ENCODE measurements at regions of chr1 and their contacts with region 1.

Region 1: GRCh38 chr1:234309598-234310459 is 63.4 kb upstream of the COA6 start:
- DNase-seq: peak; percentile 84
- ATAC-seq: peak; percentile 97
- H3K4me3 Mint-ChIP-seq: no peak overlapping the region
- H3K27ac Mint-ChIP-seq: no peak overlapping the region
- H3K4me1 Mint-ChIP-seq: peaks cover 16% of the 10 kb centered on the region
- H3K27me3 Mint-ChIP-seq: peaks cover 5% of the 10 kb centered on the region
- CTCF ChIP-seq: peak; percentile 88

Region 2: GRCh38 chr1:234154320-234155251 is 155.2 kb before region 1 on chr1:
- CTCF ChIA-PET with region 1: interaction called, 13 read pairs
- POLR2A ChIA-PET with region 1: no interaction called
- intact Hi-C with region 1: loop called (anchors 1 kb)
- DNase-seq: peak; percentile 20
- ATAC-seq: peak; percentile 83
- H3K4me3 Mint-ChIP-seq: no peak overlapping the region
- H3K27ac Mint-ChIP-seq: no peak overlapping the region
- H3K4me1 Mint-ChIP-seq: no peaks in the 10 kb centered on the region
- H3K27me3 Mint-ChIP-seq: peaks cover 12% of the 10 kb centered on the region
- CTCF ChIP-seq: peak; percentile 93

Region 3: GRCh38 chr1:234212764-234213657 is 96.8 kb before region 1 on chr1:
- CTCF ChIA-PET with region 1: interaction called, 127 read pairs
- POLR2A ChIA-PET with region 1: no interaction called
- intact Hi-C with region 1: loop called (anchors 2 kb)
- DNase-seq: peak; percentile 53
- ATAC-seq: peak; percentile 66
- H3K4me3 Mint-ChIP-seq: no peak overlapping the region
- H3K27ac Mint-ChIP-seq: no peak overlapping the region
- H3K4me1 Mint-ChIP-seq: peaks cover 27% of the 10 kb centered on the region
- H3K27me3 Mint-ChIP-seq: peaks cover 47% of the 10 kb centered on the region
- CTCF ChIP-seq: peak; percentile 70

Region 4: DNA sequence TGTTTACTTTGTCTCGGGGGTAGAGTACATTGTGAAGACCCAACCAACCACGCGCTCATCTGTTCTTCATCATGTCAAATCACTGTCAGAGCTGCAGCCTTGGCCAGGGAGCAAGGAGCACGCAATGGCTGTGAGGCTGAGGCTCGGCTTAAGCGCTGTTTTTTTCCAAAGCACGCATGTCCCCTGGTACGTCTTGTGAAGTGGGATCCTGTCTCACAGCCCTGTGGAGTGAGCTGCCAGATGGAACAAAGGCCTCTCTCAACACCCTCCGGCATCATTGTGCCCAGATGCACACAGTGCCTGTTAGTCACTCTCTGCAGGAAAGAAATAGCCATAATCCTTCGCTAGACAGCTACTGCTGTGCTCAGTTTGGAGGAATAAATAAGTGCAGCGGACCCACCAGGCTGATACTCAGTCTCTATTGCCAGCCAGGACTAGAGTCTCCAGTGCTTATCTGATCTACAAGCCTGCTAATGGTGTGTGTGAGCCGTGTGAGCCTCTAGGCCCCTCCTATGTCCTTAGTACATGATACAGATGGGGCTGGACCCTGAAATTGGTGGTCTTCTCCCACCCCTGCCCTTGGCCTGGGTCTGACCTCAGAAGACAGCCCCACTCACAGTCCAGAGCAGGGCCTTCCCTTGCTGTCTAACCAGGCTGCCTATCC is 27.9 kb before region 1 on chr1:
- CTCF ChIA-PET with region 1: interaction called, 13 read pairs
- POLR2A ChIA-PET with region 1: interaction called, 3 read pairs
- intact Hi-C with region 1: no loop called
- DNase-seq: no peak
- ATAC-seq: no peak
- H3K4me3 Mint-ChIP-seq: no peak overlapping the region
- H3K27ac Mint-ChIP-seq: no peak overlapping the region
- H3K4me1 Mint-ChIP-seq: no peaks in the 10 kb centered on the region
- H3K27me3 Mint-ChIP-seq: peaks cover 5% of the 10 kb centered on the region
- CTCF ChIP-seq: no peak

Region 5: GRCh38 chr1:234320069-234320468 is 10.2 kb after region 1 on chr1:
- CTCF ChIA-PET with region 1: interaction called, 60 read pairs
- POLR2A ChIA-PET with region 1: interaction called, 3 read pairs
- intact Hi-C with region 1: no loop called
- DNase-seq: no peak
- ATAC-seq: no peak
- H3K4me3 Mint-ChIP-seq: no peak overlapping the region
- H3K27ac Mint-ChIP-seq: no peak overlapping the region
- H3K4me1 Mint-ChIP-seq: peaks cover 10% of the 10 kb centered on the region
- H3K27me3 Mint-ChIP-seq: peaks cover 33% of the 10 kb centered on the region
- CTCF ChIP-seq: no peak

Region 6: GRCh38 chr1:234373064-234373958 is 63.5 kb after region 1 on chr1 and contains the start of gene COA6:
- CTCF ChIA-PET with region 1: interaction called, 10 read pairs
- POLR2A ChIA-PET with region 1: no interaction called
- intact Hi-C with region 1: no loop called
- DNase-seq: peak; percentile 95
- ATAC-seq: peak; percentile 87
- H3K4me3 Mint-ChIP-seq: peak within 1 kb of the TSS; percentile 98
- H3K27ac Mint-ChIP-seq: peak within 1 kb of the TSS; percentile 99
- H3K4me1 Mint-ChIP-seq: peaks cover 43% of the 10 kb centered on the region
- H3K27me3 Mint-ChIP-seq: no peaks in the 10 kb centered on the region
- CTCF ChIP-seq: no peak
- total RNA-seq, gene COA6: 59.8 to 61.8 TPM

Region 7: DNA sequence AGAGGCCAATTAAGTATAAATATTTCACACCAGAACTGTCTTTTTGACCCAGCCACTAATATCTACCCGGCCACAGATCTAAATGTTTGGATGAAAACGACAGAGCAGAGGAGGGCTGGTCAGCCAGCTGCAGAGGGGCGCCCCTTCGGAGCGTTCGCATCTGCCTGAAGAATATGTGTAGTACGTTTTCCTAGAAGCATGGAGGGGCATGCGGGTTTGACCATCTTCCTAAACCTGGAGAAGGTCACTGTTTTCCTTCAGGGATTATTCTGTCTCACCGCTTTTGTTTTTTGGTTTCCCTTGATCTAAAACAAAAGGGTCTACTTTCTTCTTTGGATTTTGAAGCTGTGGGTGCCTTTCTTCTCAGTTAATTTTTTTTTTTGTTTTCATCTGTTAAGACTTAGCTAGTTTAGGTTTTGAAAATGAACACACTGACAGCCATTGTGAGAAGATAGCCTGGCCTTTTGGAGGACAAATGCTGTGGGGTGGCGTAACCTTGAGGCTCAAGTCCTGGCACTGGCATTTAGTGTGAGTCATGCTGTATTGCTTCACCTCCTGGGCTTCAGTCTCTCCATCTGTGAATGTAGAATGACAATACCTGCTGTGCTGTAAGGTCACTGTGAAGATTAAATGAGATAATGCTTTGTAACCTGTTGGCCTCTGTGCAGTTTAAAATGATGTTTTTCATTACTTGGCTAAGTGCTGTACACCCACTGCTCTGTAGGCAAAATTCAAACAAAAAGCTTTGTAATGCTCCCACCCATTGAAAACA is 374.2 kb after region 1 on chr1:
- CTCF ChIA-PET with region 1: no interaction called
- POLR2A ChIA-PET with region 1: no interaction called
- intact Hi-C with region 1: no loop called
- DNase-seq: no peak
- ATAC-seq: no peak
- H3K4me3 Mint-ChIP-seq: no peak overlapping the region
- H3K27ac Mint-ChIP-seq: no peak overlapping the region
- H3K4me1 Mint-ChIP-seq: no peaks in the 10 kb centered on the region
- H3K27me3 Mint-ChIP-seq: no peaks in the 10 kb centered on the region
- CTCF ChIP-seq: no peak